AG04450 (cell line): ENCODE measurements at regions of chr14 and their contacts with region 1.

Region 1: DNA sequence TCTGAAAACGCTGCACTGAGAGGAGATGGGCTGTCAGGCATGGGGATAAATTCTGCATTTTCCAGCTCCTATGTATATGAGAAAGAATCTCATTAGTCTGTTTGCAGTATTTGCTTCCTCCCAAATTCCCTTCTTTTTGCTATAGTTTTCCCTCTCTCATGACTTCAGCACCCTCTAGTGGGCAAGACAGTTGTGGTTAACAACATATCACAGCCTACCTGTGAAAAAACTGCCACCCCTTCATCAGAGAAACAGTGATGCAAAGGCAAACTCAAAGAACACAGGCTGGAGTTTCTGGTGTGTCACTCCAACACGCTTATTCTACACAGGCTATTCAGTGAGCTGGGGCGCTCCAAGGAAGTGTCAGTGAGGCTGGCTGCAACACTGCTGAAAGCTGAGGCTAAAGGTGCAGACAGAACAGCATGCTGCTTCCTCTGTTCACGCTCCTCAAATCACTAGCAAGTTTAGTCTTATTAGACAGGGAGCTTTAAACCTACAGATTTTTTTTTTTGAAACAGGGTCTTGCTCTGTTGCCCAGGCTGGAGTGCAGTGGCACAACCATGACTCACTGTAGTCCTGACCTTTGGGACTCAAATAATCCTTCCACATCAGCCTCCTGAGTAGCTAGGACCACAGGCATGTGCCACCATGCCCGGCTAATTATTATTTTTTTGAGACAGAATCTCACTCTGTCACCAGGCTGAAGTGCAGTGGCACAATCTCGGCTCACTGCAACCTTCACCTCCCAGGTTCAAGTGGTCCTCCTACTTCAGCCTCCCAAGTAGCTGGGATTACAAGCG is 19.3 kb downstream of the ZC2HC1C start:
- DNase-seq: peak; percentile 34
- H3K4me3 ChIP-seq: no peak overlapping the region
- H3K27ac ChIP-seq: no peak overlapping the region
- H3K27me3 ChIP-seq: no peaks in the 10 kb centered on the region
- CTCF ChIP-seq: peak; percentile 93

Region 2: GRCh38 chr14:74821267-74821915 is 267.4 kb before region 1 on chr14:
- CTCF ChIA-PET with region 1: no interaction called
- POLR2A ChIA-PET with region 1: no interaction called
- DNase-seq: no peak
- H3K4me3 ChIP-seq: no peak overlapping the region
- H3K27ac ChIP-seq: no peak overlapping the region
- H3K27me3 ChIP-seq: no peaks in the 10 kb centered on the region
- CTCF ChIP-seq: no peak

Region 3: DNA sequence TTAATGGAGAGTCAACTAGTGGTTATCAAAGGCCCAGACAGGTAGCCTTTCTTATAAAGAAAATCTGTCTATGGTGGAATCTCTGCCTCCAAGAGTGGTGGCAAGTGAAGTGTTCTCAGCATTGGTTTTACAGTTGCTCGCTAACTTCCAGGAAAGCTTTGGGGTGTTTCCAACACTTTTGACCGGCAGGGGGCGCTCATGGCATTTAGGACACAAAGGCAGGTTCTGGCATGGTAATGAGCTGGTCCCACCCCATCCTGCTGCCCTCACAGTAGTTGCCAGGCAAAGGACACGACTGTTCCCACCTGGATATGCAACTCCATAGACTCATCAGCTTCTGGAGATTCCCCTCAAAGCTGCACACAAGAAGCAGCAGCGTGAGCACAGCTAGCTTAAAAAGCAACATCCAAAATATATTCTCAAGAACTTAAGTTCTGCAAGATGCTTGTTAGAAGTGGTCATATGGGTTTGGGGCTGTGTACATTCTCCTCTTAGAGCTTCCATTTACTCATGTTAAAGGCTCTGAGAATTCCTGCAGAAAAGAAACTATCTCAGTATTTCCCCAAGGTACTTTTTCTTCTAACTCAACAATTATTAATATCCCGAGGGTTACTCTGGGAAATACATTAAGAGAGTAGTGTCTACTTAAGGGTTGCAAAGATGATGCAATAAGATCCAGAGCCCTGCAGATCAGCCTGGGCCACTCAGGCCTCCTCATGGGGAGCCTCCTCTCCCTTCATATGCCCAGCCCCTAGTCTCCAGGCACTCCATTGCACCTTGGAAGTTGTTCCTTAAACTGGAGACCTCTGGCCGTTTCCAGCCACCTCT is 227.7 kb before region 1 on chr14:
- CTCF ChIA-PET with region 1: interaction called, 93 read pairs
- POLR2A ChIA-PET with region 1: no interaction called
- DNase-seq: peak; percentile 57
- H3K4me3 ChIP-seq: no peak overlapping the region
- H3K27ac ChIP-seq: no peak overlapping the region
- H3K27me3 ChIP-seq: peaks cover 4% of the 10 kb centered on the region
- CTCF ChIP-seq: peak; percentile 86

Region 4: GRCh38 chr14:74913986-74914573 is 174.7 kb before region 1 on chr14:
- CTCF ChIA-PET with region 1: interaction called, 39 read pairs
- POLR2A ChIA-PET with region 1: no interaction called
- DNase-seq: peak; percentile 46
- H3K4me3 ChIP-seq: no peak overlapping the region
- H3K27ac ChIP-seq: no peak overlapping the region
- H3K27me3 ChIP-seq: no peaks in the 10 kb centered on the region
- CTCF ChIP-seq: peak; percentile 94

Region 5: DNA sequence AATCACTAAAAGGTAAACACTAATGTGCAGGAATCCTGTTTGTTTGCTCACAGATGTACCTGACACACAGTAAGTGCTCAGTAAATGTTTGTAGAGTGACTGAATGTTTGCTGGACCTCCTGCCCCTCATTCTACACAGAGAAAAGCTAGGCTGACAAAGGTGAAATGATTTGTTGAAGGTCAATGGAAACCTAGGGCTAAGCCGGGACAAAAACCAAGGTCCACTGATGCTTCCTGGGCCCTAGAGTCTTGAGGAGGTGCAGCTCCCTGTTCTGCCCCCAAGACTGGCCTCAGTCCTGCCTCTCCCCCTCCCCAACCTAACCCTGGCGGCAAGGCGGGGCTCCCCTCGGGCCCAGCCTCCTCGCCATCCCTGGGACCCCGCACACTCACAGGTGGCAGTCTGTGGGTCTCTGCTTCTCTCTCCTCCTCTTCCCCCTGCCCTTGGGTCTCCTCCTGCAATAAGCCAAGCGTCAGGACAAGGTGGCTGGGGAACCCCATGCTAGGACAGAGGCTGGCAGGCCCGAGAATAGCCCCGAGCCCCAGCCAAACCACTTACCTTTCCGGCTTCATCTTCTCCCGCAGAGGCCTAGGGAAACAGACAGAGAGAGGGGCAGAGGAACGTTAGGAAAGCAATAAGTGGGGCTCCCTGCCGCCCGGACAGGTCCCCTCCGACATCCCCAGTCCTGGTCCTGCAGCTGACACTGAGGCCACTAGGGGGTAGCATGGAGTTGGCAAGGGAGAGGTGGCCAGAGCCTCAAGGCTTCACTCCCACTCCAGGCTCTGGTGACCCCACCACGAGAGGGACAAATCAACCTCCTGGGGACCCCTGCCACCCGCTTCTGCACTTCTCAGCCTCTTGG is 142.7 kb before region 1 on chr14:
- CTCF ChIA-PET with region 1: interaction called, 33 read pairs
- POLR2A ChIA-PET with region 1: no interaction called
- DNase-seq: no peak
- H3K4me3 ChIP-seq: no peak overlapping the region
- H3K27ac ChIP-seq: no peak overlapping the region
- H3K27me3 ChIP-seq: peaks cover 2% of the 10 kb centered on the region
- CTCF ChIP-seq: peak; percentile 93

Region 6: GRCh38 chr14:75022655-75023054 is 66.1 kb before region 1 on chr14:
- CTCF ChIA-PET with region 1: interaction called, 14 read pairs
- POLR2A ChIA-PET with region 1: no interaction called
- DNase-seq: no peak
- H3K4me3 ChIP-seq: no peak overlapping the region
- H3K27ac ChIP-seq: no peak overlapping the region
- H3K27me3 ChIP-seq: no peaks in the 10 kb centered on the region
- CTCF ChIP-seq: peak; percentile 52

Region 7: GRCh38 chr14:75077794-75078193 is 11.0 kb before region 1 on chr14:
- CTCF ChIA-PET with region 1: interaction called, 17 read pairs
- POLR2A ChIA-PET with region 1: no interaction called
- DNase-seq: no peak
- H3K4me3 ChIP-seq: no peak overlapping the region
- H3K27ac ChIP-seq: no peak overlapping the region
- H3K27me3 ChIP-seq: no peaks in the 10 kb centered on the region
- CTCF ChIP-seq: no peak

Region 8: DNA sequence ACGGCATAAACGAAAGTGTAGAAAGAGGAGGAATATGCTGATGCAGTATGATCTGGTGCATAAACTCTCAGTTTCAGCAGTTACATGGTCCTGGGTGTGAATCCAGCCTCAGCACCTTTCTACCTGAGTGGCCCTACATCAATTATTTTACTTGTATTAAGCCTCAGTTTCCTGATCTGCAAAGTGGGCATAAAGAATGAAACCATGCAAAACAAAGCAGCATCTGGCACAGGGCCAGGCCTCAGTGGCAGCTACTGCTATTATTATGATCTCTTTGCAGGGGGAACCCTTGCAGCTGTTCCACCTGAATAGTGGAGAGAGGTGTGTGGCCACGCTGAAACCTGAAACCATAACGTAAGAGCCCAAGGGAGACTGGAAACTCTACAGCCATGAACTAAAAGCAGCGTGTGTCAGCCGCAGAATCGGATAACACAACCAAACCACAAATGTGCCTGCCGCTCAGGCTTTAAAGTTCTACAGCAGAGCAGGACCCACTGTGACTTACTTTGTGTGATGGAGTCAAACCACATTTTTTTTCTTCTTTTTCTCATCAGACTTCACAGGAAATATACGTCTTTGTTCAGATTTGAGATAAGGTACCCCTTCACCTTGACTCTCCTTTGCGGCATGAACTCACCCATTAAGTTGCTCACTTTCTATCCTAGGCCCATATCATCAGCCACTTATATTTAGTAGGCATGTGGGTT is 160.6 kb after region 1 on chr14:
- CTCF ChIA-PET with region 1: no interaction called
- POLR2A ChIA-PET with region 1: no interaction called
- DNase-seq: no peak
- H3K4me3 ChIP-seq: no peak overlapping the region
- H3K27ac ChIP-seq: no peak overlapping the region
- H3K27me3 ChIP-seq: peaks cover 9% of the 10 kb centered on the region
- CTCF ChIP-seq: no peak